ENCODE measurements at regions of chr2 and their contacts with region 1.

Region 1: DNA sequence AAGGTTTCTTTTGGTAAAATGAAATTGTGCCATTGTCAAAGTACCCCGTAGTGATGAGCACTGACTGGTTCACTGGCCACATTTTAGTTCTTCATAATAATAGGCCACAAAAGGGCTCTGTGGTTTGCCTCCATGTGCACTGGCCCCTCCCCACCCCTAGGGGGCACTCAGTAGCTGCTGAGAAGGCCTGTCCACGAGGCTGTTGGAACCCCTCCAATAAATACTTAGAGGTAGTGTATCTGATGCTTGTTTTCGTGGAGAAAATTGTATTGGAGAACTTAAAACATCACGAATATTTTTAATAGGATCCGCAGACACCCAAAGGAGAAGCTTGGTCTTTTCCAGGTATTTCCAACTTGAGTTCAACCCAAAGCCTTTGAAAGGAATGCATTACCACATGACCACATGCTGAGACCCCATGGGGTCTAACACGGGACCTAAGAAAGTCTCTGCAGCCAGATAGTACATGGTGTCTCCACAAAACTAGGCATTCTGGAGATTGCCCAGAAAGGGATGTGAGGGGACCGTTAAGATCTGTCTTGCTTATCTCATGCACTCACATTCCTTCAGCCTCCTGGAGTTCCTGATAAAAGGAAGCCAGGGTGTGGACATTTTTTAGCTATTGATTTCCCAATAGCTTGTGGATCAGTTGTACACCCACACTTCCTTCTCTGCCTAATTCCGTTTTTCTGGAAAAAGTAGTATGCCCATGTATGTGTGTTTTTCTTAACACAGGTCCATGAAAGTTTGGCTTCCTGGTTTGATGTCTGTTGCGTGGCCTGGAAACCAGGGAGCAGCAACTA is 28.5 kb upstream of the NOSTRIN start:
- DNase-seq: peak in 1 of 9 donors; percentile 27
- ATAC-seq: peak; percentile 59
- H3K4me3 ChIP-seq: no peak overlapping the region
- H3K4me3 Mint-ChIP-seq: no peak overlapping the region
- H3K27ac ChIP-seq: no peak overlapping the region
- H3K27ac Mint-ChIP-seq: peak overlapping the region in 1 of 9 donors; percentile 30
- H3K4me1 ChIP-seq: no peaks in the 10 kb centered on the region
- H3K4me1 Mint-ChIP-seq: no peaks in the 10 kb centered on the region
- H3K27me3 ChIP-seq: no peaks in the 10 kb centered on the region
- H3K27me3 Mint-ChIP-seq: no peaks in the 10 kb centered on the region

Region 2: GRCh38 chr2:168920504-168921157 is 146.7 kb after region 1 on chr2:
- CTCF ChIA-PET with region 1: no interaction called
- POLR2A ChIA-PET with region 1: no interaction called
- intact Hi-C with region 1: loop called (anchors 1 to 5 kb)
- DNase-seq: peak in 6 of 9 donors; percentile 15 to 51 (median 42)
- ATAC-seq: no peak
- H3K4me3 ChIP-seq: no peak overlapping the region
- H3K4me3 Mint-ChIP-seq: no peak overlapping the region
- H3K27ac ChIP-seq: no peak overlapping the region
- H3K27ac Mint-ChIP-seq: peak overlapping the region in 1 of 9 donors; percentile 8
- H3K4me1 ChIP-seq: no peaks in the 10 kb centered on the region
- H3K4me1 Mint-ChIP-seq: peaks cover 0 to 8% (median 0%) of the 10 kb centered on the region in 7 donors
- H3K27me3 ChIP-seq: no peaks in the 10 kb centered on the region
- H3K27me3 Mint-ChIP-seq: peaks cover 18 to 58% (median 25%) of the 10 kb centered on the region in 5 donors